Activated CD4-positive, alpha-beta T cell treated with anti-CD3 and anti-CD28 coated beads for 36 hours (primary cell): ENCODE measurements at regions of chr3 and their contacts with region 1.

Region 1: DNA sequence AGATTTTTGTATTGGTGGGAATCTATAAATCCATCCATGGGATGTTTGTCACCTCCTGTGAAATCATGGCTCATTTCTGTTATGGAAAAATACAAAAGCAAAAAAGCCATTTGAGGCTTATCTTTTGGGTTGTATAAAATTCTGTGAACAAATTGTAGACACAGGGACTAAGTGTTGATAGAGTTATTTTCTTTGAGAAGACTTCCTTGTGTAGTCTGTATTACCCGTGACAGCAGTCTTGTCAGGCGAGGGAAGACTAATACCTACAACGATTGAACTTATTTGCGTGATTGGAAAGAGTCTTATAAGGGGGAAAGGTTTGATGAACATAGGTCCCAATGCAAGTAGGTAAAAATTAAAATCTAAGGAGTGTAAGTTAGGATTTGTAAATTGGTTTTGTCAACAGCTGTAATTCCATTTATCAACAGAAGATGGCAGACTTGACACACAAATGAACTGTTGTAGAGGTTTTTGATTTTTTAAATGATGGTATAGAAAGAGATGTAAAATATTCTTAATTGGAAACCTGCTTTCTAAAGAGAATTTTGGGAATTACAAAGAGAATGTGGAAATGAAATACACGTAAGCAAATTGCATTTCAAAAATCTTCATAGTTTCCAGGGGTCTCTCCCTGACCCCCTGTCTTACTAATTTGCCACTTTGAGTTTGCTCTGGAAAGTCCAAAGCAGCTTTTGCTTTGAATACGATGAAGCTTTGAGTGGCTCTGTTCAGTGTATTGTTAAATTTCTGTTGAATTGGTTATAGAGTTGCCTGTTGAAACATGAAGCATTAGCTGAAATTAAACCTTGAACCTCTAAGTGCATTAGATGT is 33.2 kb downstream of the SLC25A26 start:
- DNase-seq: no peak
- ATAC-seq: no peak
- H3K4me3 Mint-ChIP-seq: no peak overlapping the region
- H3K27ac Mint-ChIP-seq: no peak overlapping the region
- H3K4me1 Mint-ChIP-seq: peaks cover 2% of the 10 kb centered on the region
- H3K27me3 Mint-ChIP-seq: no peaks in the 10 kb centered on the region

Region 2: GRCh38 chr3:65878831-65879230 is 375.2 kb before region 1 on chr3:
- CTCF ChIA-PET with region 1: no interaction called
- POLR2A ChIA-PET with region 1: no interaction called
- intact Hi-C with region 1: no loop called
- DNase-seq: no peak
- ATAC-seq: no peak
- H3K4me3 Mint-ChIP-seq: no peak overlapping the region
- H3K27ac Mint-ChIP-seq: no peak overlapping the region
- H3K4me1 Mint-ChIP-seq: no peaks in the 10 kb centered on the region
- H3K27me3 Mint-ChIP-seq: peaks cover 2% of the 10 kb centered on the region

Region 3: GRCh38 chr3:66270701-66271100 is 16.7 kb after region 1 on chr3:
- CTCF ChIA-PET with region 1: interaction called, 13 read pairs
- POLR2A ChIA-PET with region 1: no interaction called
- intact Hi-C with region 1: no loop called
- DNase-seq: no peak
- ATAC-seq: no peak
- H3K4me3 Mint-ChIP-seq: no peak overlapping the region
- H3K27ac Mint-ChIP-seq: no peak overlapping the region
- H3K4me1 Mint-ChIP-seq: no peaks in the 10 kb centered on the region
- H3K27me3 Mint-ChIP-seq: no peaks in the 10 kb centered on the region

Region 4: DNA sequence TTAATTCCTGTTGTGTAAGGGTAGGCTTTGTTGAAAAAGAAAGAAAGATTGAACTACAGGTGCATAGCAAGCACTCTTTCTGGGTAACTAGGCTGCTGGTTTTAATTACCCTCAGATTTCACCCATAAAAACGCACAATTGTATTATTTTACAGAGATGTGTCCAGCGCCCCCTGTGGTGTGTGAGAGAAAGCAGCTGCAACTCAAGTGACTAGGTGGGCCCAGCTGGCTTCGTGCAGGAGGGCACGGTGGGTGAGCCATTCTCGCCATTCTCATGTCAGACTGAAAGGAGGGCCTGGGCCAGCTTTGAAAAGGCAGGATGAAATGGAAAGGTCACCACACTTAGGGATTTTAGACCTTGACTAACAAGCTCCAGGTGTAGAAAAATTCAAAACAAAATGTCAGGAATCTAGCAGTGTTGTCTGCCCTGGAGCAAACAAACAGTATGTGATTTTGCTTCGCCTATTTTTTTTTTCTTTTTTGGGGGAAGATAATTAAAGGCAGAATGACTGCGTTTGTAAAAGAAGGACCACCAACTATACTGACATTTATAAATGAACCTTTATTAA is 124.3 kb after region 1 on chr3:
- CTCF ChIA-PET with region 1: interaction called, 20 read pairs
- POLR2A ChIA-PET with region 1: no interaction called
- intact Hi-C with region 1: loop called in 1 of 2 experiments (anchors 5 kb)
- DNase-seq: peak; percentile 56
- ATAC-seq: peak; percentile 30
- H3K4me3 Mint-ChIP-seq: no peak overlapping the region
- H3K27ac Mint-ChIP-seq: peak overlapping the region; percentile 67
- H3K4me1 Mint-ChIP-seq: peaks cover 8% of the 10 kb centered on the region
- H3K27me3 Mint-ChIP-seq: no peaks in the 10 kb centered on the region

Region 5: GRCh38 chr3:66428733-66429132 is 174.7 kb after region 1 on chr3:
- CTCF ChIA-PET with region 1: no interaction called
- POLR2A ChIA-PET with region 1: no interaction called
- intact Hi-C with region 1: no loop called
- DNase-seq: no peak
- ATAC-seq: no peak
- H3K4me3 Mint-ChIP-seq: no peak overlapping the region
- H3K27ac Mint-ChIP-seq: no peak overlapping the region
- H3K4me1 Mint-ChIP-seq: peaks cover 22% of the 10 kb centered on the region
- H3K27me3 Mint-ChIP-seq: no peaks in the 10 kb centered on the region

Region 6: GRCh38 chr3:66816090-66816761 is 562.2 kb after region 1 on chr3:
- CTCF ChIA-PET with region 1: interaction called, 39 read pairs
- POLR2A ChIA-PET with region 1: no interaction called
- intact Hi-C with region 1: loop called (anchors 1 kb)
- DNase-seq: no peak
- ATAC-seq: peak; percentile 74
- H3K4me3 Mint-ChIP-seq: no peak overlapping the region
- H3K27ac Mint-ChIP-seq: no peak overlapping the region
- H3K4me1 Mint-ChIP-seq: no peaks in the 10 kb centered on the region
- H3K27me3 Mint-ChIP-seq: peaks cover 7% of the 10 kb centered on the region

Region 7: DNA sequence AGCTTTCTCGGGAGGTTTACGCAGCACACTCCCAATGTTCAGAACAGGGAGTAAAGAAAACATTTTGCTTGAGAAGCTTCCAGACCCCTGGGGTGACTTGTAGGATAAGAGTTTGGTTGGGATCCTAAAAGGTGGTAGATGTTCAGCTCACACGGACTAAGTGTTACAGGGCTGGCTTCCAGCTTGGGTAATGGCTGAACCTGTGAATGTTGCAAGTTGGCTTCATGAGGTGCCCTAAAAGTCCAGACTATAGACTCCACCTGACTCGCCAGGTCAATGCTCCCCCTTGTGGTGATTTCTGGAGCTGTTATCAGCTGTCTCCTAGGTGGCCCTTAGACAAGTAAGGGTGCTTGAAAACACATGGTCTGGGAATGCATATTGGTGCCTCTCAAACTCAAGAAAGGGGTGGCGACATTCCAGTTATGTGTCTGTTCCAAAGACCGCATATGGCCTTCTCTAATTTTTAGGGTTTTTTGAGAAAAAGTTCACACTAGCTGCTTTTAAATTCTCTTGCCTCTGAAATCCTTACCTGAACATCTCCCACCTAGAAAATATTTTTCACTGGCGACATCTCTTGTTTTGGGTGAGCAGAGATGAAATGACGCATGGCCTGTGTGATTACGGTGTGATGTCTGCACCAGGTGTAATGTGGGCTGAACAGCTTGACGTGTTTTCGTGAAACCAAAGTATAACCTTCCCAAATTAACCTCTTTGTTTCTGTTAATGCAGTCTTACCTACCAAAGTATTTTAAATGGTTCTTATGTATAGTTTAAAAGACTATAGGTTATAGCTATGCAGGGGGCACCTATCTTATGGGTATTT is 568.4 kb after region 1 on chr3:
- CTCF ChIA-PET with region 1: interaction called, 39 read pairs
- POLR2A ChIA-PET with region 1: no interaction called
- intact Hi-C with region 1: no loop called
- DNase-seq: peak; percentile 79
- ATAC-seq: peak; percentile 84
- H3K4me3 Mint-ChIP-seq: no peak overlapping the region
- H3K27ac Mint-ChIP-seq: no peak overlapping the region
- H3K4me1 Mint-ChIP-seq: no peaks in the 10 kb centered on the region
- H3K27me3 Mint-ChIP-seq: peaks cover 3% of the 10 kb centered on the region